Activated T-helper 1 cell treated with anti-CD3 and anti-CD28 coated beads, Interleukin-12 subunit alpha, Interleukin-12 subunit beta, Interleukin-2, Interleukin-4 antibody, amounts not matched to agents 30 ng/mL and 10 ng/mL and 1 ng/mL, durations not matched to agents 14 hours and 24 hours and 36 hours (primary cell): ENCODE measurements at regions of chr18 and their contacts with region 1.

Region 1: DNA sequence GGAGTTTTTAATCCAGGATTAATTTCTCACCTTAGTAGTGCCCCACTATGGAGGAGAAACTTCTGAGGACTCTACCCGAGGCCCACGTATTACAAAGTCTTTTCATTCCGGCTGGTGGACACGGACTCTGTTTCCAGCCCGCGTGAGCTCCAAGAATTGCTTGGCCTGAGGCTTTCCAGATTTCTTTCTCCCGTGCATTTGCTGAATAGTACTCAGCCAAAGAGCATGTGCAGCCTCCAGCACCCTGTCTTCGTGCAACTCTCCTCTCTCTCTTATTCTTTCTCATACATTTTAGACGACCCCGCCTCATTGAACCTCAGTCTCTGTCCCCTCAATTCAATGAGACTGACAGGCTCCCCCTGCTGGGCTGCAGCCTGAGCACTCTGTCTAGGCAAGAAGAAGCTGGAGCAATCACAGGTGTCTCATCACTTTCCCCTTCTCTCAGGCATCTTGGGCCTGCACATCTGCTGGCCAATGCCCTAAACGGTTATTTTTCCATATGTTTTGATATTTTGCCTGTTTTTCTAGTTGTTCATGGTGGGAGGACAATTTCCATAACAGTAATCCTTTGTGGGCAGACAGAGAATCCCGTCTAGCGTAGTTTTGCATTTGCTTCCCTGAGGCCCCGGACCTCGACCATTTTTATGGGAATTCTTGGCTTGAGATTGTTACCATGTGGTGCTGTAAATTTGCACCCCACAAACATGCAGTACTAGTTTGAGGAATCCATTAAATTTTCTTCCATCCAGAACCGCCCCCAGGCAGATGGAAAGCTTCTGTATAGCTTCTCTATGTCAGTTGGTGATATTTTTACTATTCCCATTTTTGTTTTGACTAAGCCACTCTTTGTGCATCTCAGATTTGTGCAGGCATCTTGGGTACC is 50.1 kb upstream of the LPIN2 start:
- DNase-seq: peak; percentile 64
- H3K4me3 Mint-ChIP-seq: peak overlapping the region; percentile 66
- H3K27ac Mint-ChIP-seq: peak overlapping the region; percentile 99
- H3K4me1 Mint-ChIP-seq: peaks cover 67% of the 10 kb centered on the region
- H3K27me3 Mint-ChIP-seq: no peaks in the 10 kb centered on the region

Region 2: DNA sequence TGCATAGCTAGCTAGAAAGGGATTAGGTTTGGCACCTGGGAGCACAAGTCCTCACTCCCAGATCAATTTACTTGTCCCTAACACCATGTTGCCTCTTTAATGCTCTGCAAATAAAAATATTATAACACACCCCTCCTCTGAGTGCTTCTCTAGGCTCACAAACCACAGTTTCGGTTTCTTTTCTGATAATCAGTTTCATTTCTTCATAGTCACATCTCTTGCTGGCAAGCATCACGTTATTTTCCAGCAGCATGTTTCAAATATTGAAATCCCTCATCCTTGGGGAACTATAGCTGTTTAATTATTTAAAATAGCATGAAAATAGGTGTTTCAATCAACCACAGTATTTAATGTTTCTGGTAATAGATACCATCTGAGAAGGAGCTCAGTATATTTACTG is 421.4 kb before region 1 on chr18:
- intact Hi-C with region 1: loop called (anchors 5 kb)
- DNase-seq: no peak
- H3K4me3 Mint-ChIP-seq: peak overlapping the region; percentile 73
- H3K27ac Mint-ChIP-seq: peak overlapping the region; percentile 94
- H3K4me1 Mint-ChIP-seq: peaks cover 53% of the 10 kb centered on the region
- H3K27me3 Mint-ChIP-seq: peaks cover 2% of the 10 kb centered on the region

Region 3: DNA sequence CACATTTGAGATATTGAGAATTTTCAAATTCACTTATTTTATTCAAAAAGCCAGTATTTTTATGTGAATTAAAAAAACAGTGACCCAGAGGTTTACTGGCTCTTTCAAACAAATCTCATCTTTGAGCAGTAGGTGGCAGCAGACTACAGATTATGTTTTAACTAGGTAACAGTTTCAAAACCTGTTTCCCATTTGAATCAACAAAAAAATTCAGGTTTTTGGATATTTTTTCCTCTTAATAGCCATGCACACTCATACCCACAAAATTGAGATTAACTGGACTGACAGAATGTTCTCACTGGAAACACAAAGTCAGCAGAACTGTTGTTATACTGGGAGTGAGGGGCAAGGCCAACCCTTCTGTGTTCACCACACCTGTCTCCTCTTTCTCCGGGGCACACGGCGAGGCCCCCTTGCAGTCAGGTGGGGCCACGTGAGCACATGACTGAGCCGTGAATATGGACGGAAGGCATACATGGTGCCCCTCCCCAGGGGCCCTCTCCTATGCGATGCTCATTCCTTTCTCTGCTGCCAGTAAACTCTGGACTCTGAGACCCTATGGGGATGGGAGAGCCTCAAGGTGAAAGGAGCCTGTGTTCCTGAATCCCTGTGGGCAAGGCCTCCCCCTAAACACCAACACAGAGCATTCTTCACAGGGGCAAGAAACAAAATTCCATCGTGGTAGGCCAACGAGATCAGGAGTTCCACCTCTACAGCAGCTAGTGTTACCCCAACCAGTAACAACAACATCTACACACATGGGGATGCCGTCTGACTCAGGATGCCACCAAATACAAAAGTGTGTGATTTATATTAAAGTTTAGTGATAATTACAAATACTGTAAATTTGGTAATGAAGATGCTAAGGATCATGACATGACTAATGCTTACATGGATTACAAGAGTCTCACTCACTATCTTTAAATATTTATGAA is 130.5 kb before region 1 on chr18:
- intact Hi-C with region 1: loop called (anchors 1 kb)
- DNase-seq: peak; percentile 29
- H3K4me3 Mint-ChIP-seq: no peak overlapping the region
- H3K27ac Mint-ChIP-seq: peak overlapping the region; percentile 82
- H3K4me1 Mint-ChIP-seq: peaks cover 38% of the 10 kb centered on the region
- H3K27me3 Mint-ChIP-seq: no peaks in the 10 kb centered on the region

Region 4: GRCh38 chr18:2978646-2979045 is 84.4 kb before region 1 on chr18:
- intact Hi-C with region 1: loop called (anchors 1 kb)
- DNase-seq: no peak
- H3K4me3 Mint-ChIP-seq: peak overlapping the region; percentile 71
- H3K27ac Mint-ChIP-seq: peak overlapping the region; percentile 89
- H3K4me1 Mint-ChIP-seq: peaks cover 90% of the 10 kb centered on the region
- H3K27me3 Mint-ChIP-seq: no peaks in the 10 kb centered on the region

Region 5: DNA sequence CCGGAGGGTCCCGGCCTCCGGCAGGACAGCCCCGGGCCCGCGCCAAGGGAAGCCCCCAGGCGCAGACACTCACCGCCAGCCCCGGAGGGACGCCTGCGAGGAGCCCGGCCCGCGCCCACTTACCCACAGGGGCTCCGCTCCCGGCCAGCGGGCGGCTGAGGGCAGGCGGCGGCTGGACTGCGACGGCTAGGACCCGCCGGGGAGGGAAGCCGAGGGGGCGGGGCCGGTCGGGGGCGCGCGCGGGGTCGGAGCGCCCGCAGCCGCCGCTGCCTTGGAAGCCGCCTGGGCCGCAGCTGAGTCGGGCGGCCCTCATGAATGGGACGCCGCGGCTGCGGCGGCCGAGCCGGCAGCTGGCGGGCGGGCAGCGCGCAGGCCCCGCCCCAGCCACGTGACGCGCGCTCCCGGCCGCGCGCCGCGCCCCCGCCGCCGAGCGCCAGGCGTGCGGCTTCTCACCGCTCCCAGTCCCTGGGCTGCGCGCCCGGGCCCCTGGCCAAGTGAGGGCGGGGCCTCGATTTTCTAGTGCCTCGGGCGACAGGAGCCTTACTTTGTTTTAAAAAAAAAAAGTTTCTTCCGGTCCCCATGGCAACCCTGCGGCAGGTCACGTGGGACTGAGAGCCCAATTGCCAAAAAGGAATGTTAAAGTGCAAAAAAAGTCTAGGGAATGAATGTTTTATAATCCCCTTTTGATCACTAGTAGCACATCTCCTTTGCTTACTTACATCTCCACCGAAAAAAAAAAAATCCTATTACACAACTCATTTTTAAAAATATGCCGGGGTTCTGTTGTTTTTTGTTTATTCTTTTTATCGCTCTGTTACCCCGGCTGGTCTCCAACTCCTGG is 49.9 kb before region 1 on chr18 and contains the start of gene LPIN2:
- intact Hi-C with region 1: loop called (anchors 1 kb)
- DNase-seq: peak; percentile 95
- H3K4me3 Mint-ChIP-seq: peak within 1 kb of the TSS; percentile 92
- H3K27ac Mint-ChIP-seq: peak within 1 kb of the TSS; percentile 90
- H3K4me1 Mint-ChIP-seq: peaks cover 65% of the 10 kb centered on the region
- H3K27me3 Mint-ChIP-seq: no peaks in the 10 kb centered on the region
- total RNA-seq, gene LPIN2: 86.6 and 91.8 TPM in 2 replicates

Region 6: DNA sequence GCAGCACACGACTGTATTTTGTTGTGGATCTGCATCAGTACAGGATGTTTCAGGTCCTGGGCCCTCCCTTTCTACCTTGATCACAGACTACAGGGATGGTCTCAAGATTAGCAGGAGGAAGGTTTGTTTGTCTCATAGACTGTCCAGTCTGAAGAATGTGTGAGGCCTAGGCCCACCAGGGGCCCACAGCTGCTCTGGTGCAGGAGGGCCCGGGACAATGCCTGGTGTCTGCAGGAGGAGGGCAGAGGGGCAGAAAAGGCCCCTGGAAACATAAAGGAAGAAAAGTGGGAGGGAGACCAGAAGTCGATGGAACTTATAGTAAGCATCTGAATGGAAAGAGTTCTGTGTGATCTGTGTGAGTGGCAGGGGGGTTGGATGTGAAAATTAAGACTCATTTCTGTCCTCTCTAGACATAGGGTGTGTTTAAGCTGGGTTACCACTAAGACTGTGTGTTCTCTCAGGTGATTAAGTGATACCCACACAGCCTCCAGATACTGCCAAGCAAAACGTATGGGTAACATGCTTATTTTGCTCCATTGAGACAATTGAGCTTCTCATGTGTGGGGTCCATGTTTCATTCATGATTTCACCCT is 16.7 kb before region 1 on chr18:
- intact Hi-C with region 1: loop called (anchors 1 kb)
- DNase-seq: no peak
- H3K4me3 Mint-ChIP-seq: no peak overlapping the region
- H3K27ac Mint-ChIP-seq: peak overlapping the region; percentile 77
- H3K4me1 Mint-ChIP-seq: peaks cover 34% of the 10 kb centered on the region
- H3K27me3 Mint-ChIP-seq: no peaks in the 10 kb centered on the region

Region 7: GRCh38 chr18:3129053-3129864 is 66.2 kb after region 1 on chr18:
- intact Hi-C with region 1: loop called (anchors 1 kb)
- DNase-seq: peak; percentile 70
- H3K4me3 Mint-ChIP-seq: no peak overlapping the region
- H3K27ac Mint-ChIP-seq: peak overlapping the region; percentile 27
- H3K4me1 Mint-ChIP-seq: peaks cover 10% of the 10 kb centered on the region
- H3K27me3 Mint-ChIP-seq: peaks cover 3% of the 10 kb centered on the region

Region 8: GRCh38 chr18:3329471-3329870 is 266.4 kb after region 1 on chr18:
- intact Hi-C with region 1: no loop called
- DNase-seq: no peak
- H3K4me3 Mint-ChIP-seq: no peak overlapping the region
- H3K27ac Mint-ChIP-seq: no peak overlapping the region
- H3K4me1 Mint-ChIP-seq: no peaks in the 10 kb centered on the region
- H3K27me3 Mint-ChIP-seq: no peaks in the 10 kb centered on the region